Natural killer cell (primary cell): ENCODE measurements at regions of chr11 and their contacts with region 1.

Region 1: GRCh38 chr11:102346748-102347461 is at the start of gene BIRC2:
- DNase-seq: peak; percentile 96 to 98
- ATAC-seq: peak; percentile 82 to 94 (median 82)
- H3K4me3 ChIP-seq: peak within 1 kb of the TSS; percentile 95
- H3K4me3 Mint-ChIP-seq: peak within 1 kb of the TSS; percentile 98
- H3K27ac ChIP-seq: peak within 1 kb of the TSS; percentile 100
- H3K27ac Mint-ChIP-seq: peak within 1 kb of the TSS; percentile 97 to 99
- H3K4me1 ChIP-seq: peaks cover 8% of the 10 kb centered on the region
- H3K4me1 Mint-ChIP-seq: peaks cover 44 to 51% of the 10 kb centered on the region in 2 donors
- H3K27me3 ChIP-seq: no peaks in the 10 kb centered on the region
- H3K27me3 Mint-ChIP-seq: no peaks in the 10 kb centered on the region
- CTCF ChIP-seq: peak; percentile 67
- total RNA-seq, gene BIRC2: 92.2 to 146 (median 111) TPM

Region 2: GRCh38 chr11:102293873-102294601 is 52.9 kb before region 1 on chr11:
- intact Hi-C with region 1: loop called (anchors 2 kb)
- DNase-seq: peak in 1 of 2 donors; percentile 84
- ATAC-seq: peak; percentile 91 to 97 (median 96)
- H3K4me3 ChIP-seq: peak overlapping the region; percentile 26
- H3K4me3 Mint-ChIP-seq: peak overlapping the region; percentile 89
- H3K27ac ChIP-seq: peak overlapping the region; percentile 48
- H3K27ac Mint-ChIP-seq: peak overlapping the region; percentile 22 to 82
- H3K4me1 ChIP-seq: peaks cover 3% of the 10 kb centered on the region
- H3K4me1 Mint-ChIP-seq: peaks cover 5% of the 10 kb centered on the region in 2 donors
- H3K27me3 ChIP-seq: no peaks in the 10 kb centered on the region
- H3K27me3 Mint-ChIP-seq: no peaks in the 10 kb centered on the region
- CTCF ChIP-seq: peak; percentile 75

Region 3: GRCh38 chr11:102317099-102317767 is 29.7 kb before region 1 on chr11 and contains the start of gene BIRC3:
- intact Hi-C with region 1: loop called (anchors 1 kb)
- DNase-seq: peak; percentile 86 to 99
- ATAC-seq: peak; percentile 88 to 96 (median 90)
- H3K4me3 ChIP-seq: peak within 1 kb of the TSS; percentile 76
- H3K4me3 Mint-ChIP-seq: peak within 1 kb of the TSS; percentile 95
- H3K27ac ChIP-seq: peak within 1 kb of the TSS; percentile 96
- H3K27ac Mint-ChIP-seq: peak within 1 kb of the TSS; percentile 96 to 97
- H3K4me1 ChIP-seq: peaks cover 50% of the 10 kb centered on the region
- H3K4me1 Mint-ChIP-seq: peaks cover 59 to 62% of the 10 kb centered on the region in 2 donors
- H3K27me3 ChIP-seq: no peaks in the 10 kb centered on the region
- H3K27me3 Mint-ChIP-seq: no peaks in the 10 kb centered on the region
- CTCF ChIP-seq: no peak
- total RNA-seq, gene BIRC3: 14.2 to 92.3 (median 20.1) TPM

Region 4: GRCh38 chr11:102420547-102420946 is 73.6 kb after region 1 on chr11:
- intact Hi-C with region 1: no loop called
- DNase-seq: no peak
- ATAC-seq: no peak
- H3K4me3 ChIP-seq: no peak overlapping the region
- H3K4me3 Mint-ChIP-seq: no peak overlapping the region
- H3K27ac ChIP-seq: no peak overlapping the region
- H3K27ac Mint-ChIP-seq: no peak overlapping the region
- H3K4me1 ChIP-seq: peaks cover 12% of the 10 kb centered on the region
- H3K4me1 Mint-ChIP-seq: peaks cover 48 to 50% of the 10 kb centered on the region in 2 donors
- H3K27me3 ChIP-seq: no peaks in the 10 kb centered on the region
- H3K27me3 Mint-ChIP-seq: no peaks in the 10 kb centered on the region
- CTCF ChIP-seq: no peak

Region 5: GRCh38 chr11:102451681-102452460 is 105.0 kb after region 1 on chr11:
- intact Hi-C with region 1: loop called (anchors 2 kb)
- DNase-seq: peak; percentile 54 to 88
- ATAC-seq: peak; percentile 55 to 74 (median 56)
- H3K4me3 ChIP-seq: peak overlapping the region; percentile 76
- H3K4me3 Mint-ChIP-seq: peak overlapping the region; percentile 96
- H3K27ac ChIP-seq: peak overlapping the region; percentile 81
- H3K27ac Mint-ChIP-seq: peak overlapping the region; percentile 87 to 93
- H3K4me1 ChIP-seq: peaks cover 19% of the 10 kb centered on the region
- H3K4me1 Mint-ChIP-seq: peaks cover 54 to 70% of the 10 kb centered on the region in 2 donors
- H3K27me3 ChIP-seq: no peaks in the 10 kb centered on the region
- H3K27me3 Mint-ChIP-seq: peaks cover 6 to 7% of the 10 kb centered on the region in 2 donors
- CTCF ChIP-seq: no peak